ENCODE measurements at regions of chr5 and their contacts with region 1.

Region 1: DNA sequence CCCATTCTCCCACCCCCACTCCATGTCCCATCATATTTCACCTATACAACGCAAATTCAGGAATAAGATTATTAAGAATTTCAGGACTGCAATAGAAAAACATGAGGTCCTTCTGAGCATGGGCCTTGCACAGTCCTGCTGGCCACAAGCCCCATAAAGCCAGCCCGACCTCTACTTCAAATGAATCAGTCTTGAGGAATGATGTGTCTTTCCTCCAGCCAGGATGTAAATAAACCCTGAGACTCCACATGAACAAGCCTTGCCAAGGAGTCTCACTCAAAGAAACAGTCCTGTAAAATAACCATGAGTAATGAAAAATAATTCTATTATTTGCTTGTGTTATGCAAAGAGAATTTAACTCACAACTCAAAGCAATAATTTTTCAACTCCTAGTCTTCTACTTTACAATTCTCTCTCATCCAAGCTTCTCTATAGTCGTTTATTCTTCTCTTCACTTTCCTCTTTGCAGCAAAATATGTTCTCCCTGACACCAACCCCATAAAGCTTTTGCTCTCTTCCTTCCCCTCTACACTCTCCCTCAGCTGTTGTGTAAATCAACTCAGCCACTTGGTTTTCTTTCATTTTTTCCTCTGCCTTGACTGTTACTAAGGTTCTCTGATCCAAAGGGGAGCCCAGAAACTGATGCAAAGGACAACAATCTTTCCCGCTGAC is 140.1 kb upstream of the MOCS2 start:
- DNase-seq: peak; percentile 87
- H3K4me3 ChIP-seq: no peak overlapping the region
- H3K27ac ChIP-seq: peak overlapping the region; percentile 98
- H3K4me1 ChIP-seq: peaks cover 77% of the 10 kb centered on the region
- H3K27me3 ChIP-seq: no peaks in the 10 kb centered on the region
- CTCF ChIP-seq: no peak

Region 2: GRCh38 chr5:53201746-53202145 is 47.9 kb before region 1 on chr5:
- CTCF ChIA-PET with region 1: no interaction called
- dilution Hi-C with region 1: loop called (anchors 5 kb)
- in situ Hi-C with region 1: no loop called
- intact Hi-C with region 1: no loop called
- DNase-seq: no peak
- H3K4me3 ChIP-seq: no peak overlapping the region
- H3K27ac ChIP-seq: no peak overlapping the region
- H3K4me1 ChIP-seq: no peaks in the 10 kb centered on the region
- H3K27me3 ChIP-seq: no peaks in the 10 kb centered on the region
- CTCF ChIP-seq: peak in 1 of 2 donors; percentile 5

Region 3: GRCh38 chr5:53211799-53212198 is 37.9 kb before region 1 on chr5:
- CTCF ChIA-PET with region 1: interaction called, 4 read pairs
- dilution Hi-C with region 1: no loop called
- in situ Hi-C with region 1: no loop called
- intact Hi-C with region 1: loop called (anchors 2 kb)
- DNase-seq: peak; percentile 95
- H3K4me3 ChIP-seq: no peak overlapping the region
- H3K27ac ChIP-seq: peak overlapping the region; percentile 84
- H3K4me1 ChIP-seq: peaks cover 6% of the 10 kb centered on the region
- H3K27me3 ChIP-seq: no peaks in the 10 kb centered on the region
- CTCF ChIP-seq: no peak

Region 4: DNA sequence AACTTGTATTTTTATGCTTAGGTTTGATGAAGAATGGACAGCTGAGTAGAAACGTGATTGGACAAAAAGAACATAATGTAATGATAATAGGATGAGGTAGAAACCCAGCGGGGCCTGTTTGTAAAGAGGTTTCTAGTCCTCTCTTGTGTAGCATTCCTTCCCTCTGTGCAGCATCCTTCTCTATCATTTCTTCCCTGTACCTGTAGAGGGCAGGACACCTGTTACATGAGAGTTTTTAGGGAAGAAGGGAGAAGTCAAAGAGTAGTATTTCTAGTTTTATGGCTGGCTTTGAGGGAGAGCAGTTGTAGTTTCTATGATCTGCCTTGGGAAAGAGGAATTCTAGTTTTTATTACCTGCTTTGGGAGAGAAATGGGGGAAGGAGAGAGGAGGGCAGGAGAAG is 68.6 kb after region 1 on chr5:
- CTCF ChIA-PET with region 1: no interaction called
- dilution Hi-C with region 1: no loop called
- in situ Hi-C with region 1: no loop called
- intact Hi-C with region 1: loop called (anchors 1 kb)
- DNase-seq: peak; percentile 49
- H3K4me3 ChIP-seq: no peak overlapping the region
- H3K27ac ChIP-seq: peak overlapping the region; percentile 99
- H3K4me1 ChIP-seq: peaks cover 50% of the 10 kb centered on the region
- H3K27me3 ChIP-seq: no peaks in the 10 kb centered on the region
- CTCF ChIP-seq: peak; percentile 35 to 61

Region 5: DNA sequence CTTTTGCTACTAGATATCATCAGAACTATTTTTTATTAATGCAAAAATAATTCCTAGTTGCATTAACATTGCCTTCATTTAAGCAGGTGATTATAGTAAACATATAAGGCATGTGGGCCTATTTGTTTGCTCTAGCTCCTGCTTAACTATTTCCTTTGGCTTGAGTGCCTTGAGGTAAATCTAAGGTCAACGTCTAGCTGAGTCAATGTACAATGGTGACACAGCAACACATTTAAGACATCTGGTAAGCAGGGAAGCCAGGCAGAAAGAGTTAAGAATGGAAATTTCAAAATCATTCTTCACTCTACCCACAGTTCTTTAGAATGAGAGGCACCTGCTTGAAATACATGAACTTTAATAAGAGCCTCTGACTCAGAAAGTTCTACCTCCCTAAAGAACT is 118.9 kb after region 1 on chr5:
- CTCF ChIA-PET with region 1: no interaction called
- dilution Hi-C with region 1: loop called (anchors 5 kb)
- in situ Hi-C with region 1: no loop called
- intact Hi-C with region 1: loop called (anchors 5 kb)
- DNase-seq: peak; percentile 69
- H3K4me3 ChIP-seq: no peak overlapping the region
- H3K27ac ChIP-seq: peak overlapping the region; percentile 44
- H3K4me1 ChIP-seq: peaks cover 35% of the 10 kb centered on the region
- H3K27me3 ChIP-seq: no peaks in the 10 kb centered on the region
- CTCF ChIP-seq: no peak